Activated CD8-positive, alpha-beta memory T cell treated with anti-CD3 and anti-CD28 coated beads, Interleukin-2, amount 10 ng/mL, durations not matched to agents 7 days and 5 days (primary cell): ENCODE measurements at regions of chr3 and their contacts with region 1.

Region 1: GRCh38 chr3:128607710-128608048 is 42.9 kb downstream of the RPN1 start:
- DNase-seq: no peak
- ATAC-seq: no peak
- H3K4me3 Mint-ChIP-seq: no peak overlapping the region
- H3K27ac Mint-ChIP-seq: no peak overlapping the region
- H3K4me1 Mint-ChIP-seq: peaks cover 2% of the 10 kb centered on the region
- H3K27me3 Mint-ChIP-seq: no peaks in the 10 kb centered on the region

Region 2: GRCh38 chr3:128426128-128426921 is 181.4 kb before region 1 on chr3:
- CTCF ChIA-PET with region 1: interaction called, 25 read pairs
- DNase-seq: peak; percentile 57
- ATAC-seq: peak; percentile 94
- H3K4me3 Mint-ChIP-seq: no peak overlapping the region
- H3K27ac Mint-ChIP-seq: no peak overlapping the region
- H3K4me1 Mint-ChIP-seq: peaks cover 2% of the 10 kb centered on the region
- H3K27me3 Mint-ChIP-seq: peaks cover 12% of the 10 kb centered on the region

Region 3: DNA sequence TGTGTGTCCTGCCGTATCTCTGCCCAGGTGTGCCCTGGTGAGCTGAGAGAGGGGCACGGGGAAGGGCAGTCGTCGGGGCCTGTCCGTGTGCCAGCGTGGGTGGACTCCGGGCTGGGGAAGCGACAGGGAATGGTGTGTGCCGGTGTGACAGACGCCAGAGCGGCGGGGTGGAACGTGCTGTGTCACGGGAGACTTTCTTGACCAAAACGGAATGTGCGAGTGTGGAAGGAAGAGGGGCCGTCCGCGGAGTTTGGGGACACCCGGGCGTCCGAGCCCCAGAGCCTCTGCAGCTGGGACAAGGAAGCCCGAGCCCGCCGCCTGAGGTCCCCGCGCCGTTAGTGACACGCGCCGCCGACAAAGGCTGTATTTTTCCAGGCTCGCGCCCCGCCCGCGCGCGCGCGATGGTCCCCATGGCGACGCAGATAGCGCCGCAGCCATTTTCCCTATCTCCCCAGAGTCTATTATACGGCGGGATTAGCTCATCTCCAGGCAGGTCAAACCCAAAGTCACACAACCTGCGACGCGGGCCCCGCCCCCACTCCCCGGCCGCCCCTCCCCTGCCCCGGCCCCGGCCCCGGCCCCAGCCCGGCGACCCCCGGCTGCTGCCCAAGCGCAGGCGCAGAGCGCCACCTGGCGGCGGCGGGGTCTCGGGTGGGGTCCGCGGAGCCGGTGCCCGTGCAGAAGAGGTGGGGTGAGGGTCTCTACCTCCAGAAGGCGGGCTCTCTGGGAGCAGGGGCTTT is 110.1 kb before region 1 on chr3:
- CTCF ChIA-PET with region 1: interaction called, 10 read pairs
- DNase-seq: peak; percentile 67
- ATAC-seq: peak; percentile 75
- H3K4me3 Mint-ChIP-seq: peak overlapping the region; percentile 46
- H3K27ac Mint-ChIP-seq: no peak overlapping the region
- H3K4me1 Mint-ChIP-seq: peaks cover 6% of the 10 kb centered on the region
- H3K27me3 Mint-ChIP-seq: peaks cover 76% of the 10 kb centered on the region

Region 4: DNA sequence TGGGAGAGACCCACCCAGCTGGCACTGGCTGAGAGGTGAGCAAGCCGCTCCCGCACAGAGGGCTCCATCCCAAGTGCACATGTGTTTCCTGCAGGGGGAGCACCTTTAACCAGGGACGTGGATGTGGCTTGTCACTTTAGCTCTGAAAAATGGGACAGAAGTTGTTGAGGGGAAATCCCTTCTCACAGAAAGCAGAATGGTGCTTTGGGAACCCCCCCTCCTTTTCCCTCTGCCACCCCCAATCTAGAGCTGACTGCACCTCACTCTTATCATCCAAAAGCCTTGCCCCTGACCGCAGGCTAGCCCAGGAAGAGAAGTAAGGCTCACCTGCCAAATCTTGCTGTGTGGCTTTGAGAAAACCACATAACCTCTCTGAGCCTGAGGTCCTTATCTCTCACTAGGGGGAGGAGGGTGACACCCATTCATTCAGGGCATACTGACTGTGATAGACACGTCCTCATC is 35.0 kb before region 1 on chr3:
- CTCF ChIA-PET with region 1: interaction called, 11 read pairs
- DNase-seq: peak; percentile 56
- ATAC-seq: peak; percentile 73
- H3K4me3 Mint-ChIP-seq: no peak overlapping the region
- H3K27ac Mint-ChIP-seq: no peak overlapping the region
- H3K4me1 Mint-ChIP-seq: peaks cover 15% of the 10 kb centered on the region
- H3K27me3 Mint-ChIP-seq: peaks cover 17% of the 10 kb centered on the region